ENCODE measurements at regions of chr1 and their contacts with region 1.

Region 1: DNA sequence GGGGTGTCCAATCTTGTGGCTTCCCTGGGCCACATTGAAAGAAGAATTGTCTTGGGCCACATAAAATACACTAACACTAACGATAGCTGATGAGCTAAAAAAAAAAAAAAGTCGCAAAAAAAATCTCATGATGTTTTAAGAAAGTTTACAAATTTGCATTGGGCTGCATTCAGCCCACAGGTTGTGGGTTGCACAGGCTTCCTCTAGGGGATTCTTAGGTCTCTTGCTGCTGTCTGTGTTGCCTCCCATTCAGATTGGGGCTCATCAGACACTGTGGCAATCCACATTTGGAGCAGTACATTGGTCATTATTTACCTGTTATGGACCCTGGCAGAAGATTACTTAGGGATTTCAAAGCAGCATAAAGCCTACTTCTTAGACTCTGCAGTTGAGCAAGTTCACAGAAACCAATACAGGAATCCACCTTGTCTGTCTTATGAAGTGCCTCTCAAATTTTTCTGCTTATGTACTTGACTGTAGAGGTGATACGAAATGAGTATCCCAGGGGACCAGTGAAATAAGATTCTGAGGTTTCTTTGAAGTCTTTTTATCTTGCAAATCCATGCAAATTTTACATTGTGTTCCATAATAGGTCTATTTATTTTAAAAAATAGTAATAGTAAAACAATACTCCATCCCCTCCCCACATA is 205.5 kb downstream of the RPS6KC1 start:
- DNase-seq: no peak
- ATAC-seq: no peak
- H3K4me3 ChIP-seq: no peak overlapping the region
- H3K27ac ChIP-seq: no peak overlapping the region
- H3K4me1 ChIP-seq: no peaks in the 10 kb centered on the region
- H3K27me3 ChIP-seq: no peaks in the 10 kb centered on the region
- CTCF ChIP-seq: no peak

Region 2: DNA sequence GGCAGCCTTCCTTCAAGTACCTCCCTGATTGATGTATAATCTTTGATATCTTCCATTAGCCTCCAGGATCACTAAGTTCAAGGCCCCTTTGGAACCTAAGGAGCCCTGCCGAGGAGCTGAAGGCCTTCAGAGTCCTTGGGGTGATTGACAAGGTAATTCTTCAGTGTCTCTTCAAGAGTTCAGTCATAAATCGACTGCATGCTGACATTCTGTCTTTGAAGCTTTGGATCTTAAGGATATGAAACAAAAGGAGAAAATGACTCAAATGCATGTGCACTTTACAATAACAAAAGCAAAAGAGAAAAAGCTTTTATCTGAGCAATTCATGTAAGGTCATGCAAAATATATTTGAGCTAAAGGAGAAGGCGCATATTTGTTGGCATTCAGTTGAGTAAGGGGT is 80.2 kb before region 1 on chr1:
- intact Hi-C with region 1: no loop called
- DNase-seq: no peak
- ATAC-seq: no peak
- H3K4me3 ChIP-seq: no peak overlapping the region
- H3K27ac ChIP-seq: no peak overlapping the region
- H3K4me1 ChIP-seq: no peaks in the 10 kb centered on the region
- H3K27me3 ChIP-seq: no peaks in the 10 kb centered on the region
- CTCF ChIP-seq: no peak

Region 3: DNA sequence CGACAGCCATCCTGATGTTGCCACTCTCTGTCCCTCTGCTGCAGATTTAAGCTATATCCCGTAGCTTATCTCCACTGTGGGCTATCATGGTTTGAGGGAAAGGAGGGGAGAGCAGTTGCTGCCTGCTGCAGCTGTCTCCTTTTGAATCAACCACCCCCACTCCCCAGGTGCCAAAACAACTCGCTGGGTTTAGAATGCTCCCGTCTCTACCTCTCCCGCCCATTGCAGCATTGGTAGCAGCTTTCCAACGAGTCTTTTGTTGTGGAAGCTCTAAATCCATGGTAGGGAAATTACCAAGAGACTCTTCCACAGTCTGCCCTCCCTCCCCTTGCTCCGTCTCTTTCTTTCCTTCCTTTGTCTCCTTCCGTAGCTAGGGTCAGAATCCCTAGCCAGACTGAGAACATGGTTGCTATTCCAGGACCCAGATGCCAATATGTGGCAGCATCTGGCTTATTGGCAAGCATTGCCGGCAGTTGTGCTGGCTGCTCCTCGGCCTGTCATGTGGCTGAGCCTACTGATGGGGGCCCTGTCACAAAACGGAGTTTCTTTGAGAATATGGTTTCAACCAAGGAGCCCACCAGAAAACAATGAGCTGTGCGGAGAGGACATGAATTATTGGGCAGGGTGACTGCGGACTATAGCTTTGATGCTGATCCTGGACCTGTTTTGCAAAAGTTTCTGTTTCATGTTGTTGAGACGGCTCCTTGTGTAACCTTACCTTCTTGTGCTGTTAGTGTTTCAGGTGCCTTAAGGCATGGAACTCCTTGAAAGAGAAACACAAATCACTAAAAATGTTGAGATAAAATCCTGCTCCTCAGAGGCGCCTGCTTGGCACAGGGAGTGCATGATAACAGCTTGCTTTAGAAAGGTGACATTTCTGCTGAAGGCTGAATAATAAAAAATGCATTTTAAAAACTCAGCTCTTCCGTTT is 25.3 kb after region 1 on chr1:
- intact Hi-C with region 1: loop called in 1 of 10 experiments (anchors 1 kb)
- DNase-seq: no peak
- ATAC-seq: no peak
- H3K4me3 ChIP-seq: no peak overlapping the region
- H3K27ac ChIP-seq: no peak overlapping the region
- H3K4me1 ChIP-seq: no peaks in the 10 kb centered on the region
- H3K27me3 ChIP-seq: no peaks in the 10 kb centered on the region
- CTCF ChIP-seq: no peak